B cell (primary cell): ENCODE measurements at regions of chr4 and their contacts with region 1.

Region 1: DNA sequence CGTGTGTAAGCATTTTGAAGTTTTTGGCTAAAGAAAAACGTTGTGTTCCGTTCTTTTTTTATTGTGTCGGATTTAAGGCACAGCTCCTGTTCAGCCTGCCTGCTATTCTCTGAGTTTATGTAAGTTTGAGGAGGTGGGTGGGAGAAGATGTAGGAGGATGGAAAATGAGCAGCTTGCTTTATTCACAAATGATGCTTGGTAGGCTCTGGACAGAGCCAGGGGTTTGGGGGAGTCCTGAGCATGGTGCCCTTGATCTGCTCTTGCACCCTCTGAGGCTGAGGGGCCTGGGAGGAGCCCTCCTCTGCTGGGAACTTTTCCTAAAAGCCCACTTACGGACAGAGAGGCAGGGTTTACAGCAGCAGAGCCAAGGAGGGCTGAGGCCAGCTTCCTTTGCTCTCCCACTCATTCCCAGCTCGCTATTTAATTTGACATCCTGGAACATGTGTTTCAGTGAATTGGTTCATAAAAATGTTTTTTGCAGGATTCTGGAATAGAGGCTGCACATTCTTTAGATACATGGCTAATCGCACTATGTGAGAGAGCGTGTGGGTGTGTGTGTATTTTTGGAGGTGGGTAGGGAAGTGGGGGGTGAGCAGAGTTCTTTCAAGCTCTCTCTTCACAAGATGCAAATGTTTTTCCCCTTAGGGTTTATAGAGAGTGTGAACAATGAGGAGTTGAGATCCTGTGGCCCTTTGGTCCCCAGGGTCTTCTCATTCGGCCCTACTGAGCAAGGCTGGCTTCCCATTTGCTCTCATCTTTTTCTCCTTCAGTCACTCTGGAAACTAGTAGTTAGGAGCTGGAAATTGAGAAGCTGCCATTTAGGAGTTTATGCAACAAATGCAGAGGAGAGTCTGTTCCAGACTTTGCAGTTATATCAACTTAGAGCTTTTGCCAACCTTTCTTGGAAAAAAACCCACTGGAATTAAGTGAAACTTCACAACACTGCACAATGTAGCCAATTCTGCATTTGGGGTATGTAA is 32.1 kb downstream of the TMEM131L start:
- DNase-seq: peak; percentile 62
- ATAC-seq: peak; percentile 82
- H3K4me3 ChIP-seq: peak overlapping the region in 2 of 5 experiments; percentile 18 to 30
- H3K4me3 Mint-ChIP-seq: peak overlapping the region; percentile 75
- H3K27ac ChIP-seq: peak overlapping the region; percentile 7 to 98
- H3K27ac Mint-ChIP-seq: peak overlapping the region; percentile 85
- H3K4me1 ChIP-seq: peaks cover 80 to 83% of the 10 kb centered on the region in 2 donors
- H3K4me1 Mint-ChIP-seq: peaks cover 91% of the 10 kb centered on the region
- H3K27me3 ChIP-seq: no peaks in the 10 kb centered on the region
- H3K27me3 Mint-ChIP-seq: no peaks in the 10 kb centered on the region
- CTCF ChIP-seq: no peak

Region 2: DNA sequence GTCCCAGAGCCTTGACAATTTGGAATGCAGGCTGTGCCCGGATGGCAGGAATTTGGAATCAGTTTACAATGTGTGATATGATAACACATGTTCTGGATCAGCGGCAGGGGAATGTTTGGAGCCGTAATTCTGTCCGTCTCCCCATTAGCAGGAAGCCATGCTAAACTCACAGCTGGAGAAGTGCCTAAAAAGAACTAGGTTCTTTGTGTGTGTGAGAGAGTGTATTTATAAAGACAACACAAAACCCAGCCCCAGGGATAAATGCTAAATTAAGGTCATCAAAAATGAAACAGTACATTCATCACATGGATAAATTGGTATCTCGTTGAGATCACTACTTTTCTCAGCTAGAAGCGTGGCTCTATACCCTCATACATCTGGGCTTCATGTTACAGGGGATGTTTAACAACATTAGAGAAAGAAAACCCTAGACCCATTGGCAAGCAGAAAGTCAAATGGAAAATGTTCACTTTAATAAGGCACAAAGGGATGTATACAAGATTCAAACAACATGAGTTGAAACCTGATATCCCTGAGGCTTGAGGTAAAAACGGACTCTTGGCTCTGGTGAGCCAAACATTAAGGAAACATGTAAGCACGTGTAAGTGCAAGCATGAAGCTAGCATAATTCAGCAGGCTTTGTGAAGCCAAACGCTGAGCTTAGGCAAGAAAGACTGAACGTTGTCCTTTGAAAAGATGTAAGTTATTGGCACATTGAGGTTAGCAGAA is 50.1 kb before region 1 on chr4:
- CTCF ChIA-PET with region 1: no interaction called
- POLR2A ChIA-PET with region 1: no interaction called
- intact Hi-C with region 1: no loop called
- DNase-seq: no peak
- ATAC-seq: no peak
- H3K4me3 ChIP-seq: no peak overlapping the region
- H3K4me3 Mint-ChIP-seq: no peak overlapping the region
- H3K27ac ChIP-seq: peak overlapping the region in 1 of 2 donors; percentile 77
- H3K27ac Mint-ChIP-seq: peak overlapping the region; percentile 26
- H3K4me1 ChIP-seq: peaks cover 15 to 20% of the 10 kb centered on the region in 2 donors
- H3K4me1 Mint-ChIP-seq: peaks cover 27% of the 10 kb centered on the region
- H3K27me3 ChIP-seq: no peaks in the 10 kb centered on the region
- H3K27me3 Mint-ChIP-seq: no peaks in the 10 kb centered on the region
- CTCF ChIP-seq: no peak

Region 3: DNA sequence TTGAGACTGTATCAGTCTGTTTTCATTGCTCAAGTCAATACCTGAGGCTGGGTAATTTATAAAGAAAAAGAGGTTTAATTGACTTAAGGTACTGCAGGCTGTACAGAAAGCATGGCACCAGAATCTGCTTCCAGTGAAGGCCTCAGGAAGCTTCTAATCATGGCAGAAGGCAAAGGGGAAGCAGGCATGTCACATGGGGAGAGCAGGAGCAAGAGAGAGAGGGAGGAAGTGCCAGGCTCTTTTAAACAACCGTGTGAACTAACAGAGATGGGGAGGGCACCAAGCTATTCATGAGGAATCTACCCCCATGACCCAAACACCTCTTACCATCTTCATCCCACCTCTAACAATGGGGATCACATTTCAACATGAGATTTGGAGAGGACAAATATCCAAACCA is 39.3 kb before region 1 on chr4:
- CTCF ChIA-PET with region 1: no interaction called
- POLR2A ChIA-PET with region 1: no interaction called
- intact Hi-C with region 1: no loop called
- DNase-seq: no peak
- ATAC-seq: no peak
- H3K4me3 ChIP-seq: no peak overlapping the region
- H3K4me3 Mint-ChIP-seq: no peak overlapping the region
- H3K27ac ChIP-seq: no peak overlapping the region
- H3K27ac Mint-ChIP-seq: no peak overlapping the region
- H3K4me1 ChIP-seq: peaks cover 0 to 4% of the 10 kb centered on the region in 2 donors
- H3K4me1 Mint-ChIP-seq: peaks cover 6% of the 10 kb centered on the region
- H3K27me3 ChIP-seq: no peaks in the 10 kb centered on the region
- H3K27me3 Mint-ChIP-seq: no peaks in the 10 kb centered on the region
- CTCF ChIP-seq: no peak

Region 4: DNA sequence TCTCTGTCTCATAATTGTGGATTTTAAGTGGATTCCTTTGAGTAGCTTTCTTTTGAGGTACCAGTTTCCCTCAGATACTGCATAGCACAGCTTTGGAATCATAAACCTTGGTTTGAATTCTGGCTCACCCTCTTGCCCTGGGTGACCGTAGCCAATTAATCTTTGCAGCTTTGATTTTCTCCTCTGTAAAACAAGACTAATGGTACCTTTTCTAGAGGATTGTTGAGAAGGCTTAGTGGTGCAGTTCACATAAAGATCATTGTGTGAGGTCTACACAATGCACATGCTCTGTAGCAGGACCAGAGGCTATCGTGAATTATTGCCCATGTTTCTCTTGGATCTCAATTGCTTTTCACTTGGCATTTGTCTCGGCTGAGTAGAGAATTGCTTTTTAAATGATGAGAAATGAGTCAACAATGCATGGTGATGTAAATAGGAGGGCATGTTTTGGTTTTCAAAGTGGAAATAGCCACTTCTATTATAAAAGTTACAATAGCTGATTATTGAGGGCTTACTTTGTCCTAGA is 15.8 kb after region 1 on chr4:
- CTCF ChIA-PET with region 1: interaction called, 6 read pairs
- POLR2A ChIA-PET with region 1: interaction called, 16 read pairs
- intact Hi-C with region 1: loop called (anchors 1 kb)
- DNase-seq: no peak
- ATAC-seq: no peak
- H3K4me3 ChIP-seq: no peak overlapping the region
- H3K4me3 Mint-ChIP-seq: peak overlapping the region; percentile 37
- H3K27ac ChIP-seq: peak overlapping the region in 1 of 2 donors; percentile 66
- H3K27ac Mint-ChIP-seq: peak overlapping the region; percentile 78
- H3K4me1 ChIP-seq: peaks cover 33 to 36% of the 10 kb centered on the region in 2 donors
- H3K4me1 Mint-ChIP-seq: peaks cover 71% of the 10 kb centered on the region
- H3K27me3 ChIP-seq: no peaks in the 10 kb centered on the region
- H3K27me3 Mint-ChIP-seq: no peaks in the 10 kb centered on the region
- CTCF ChIP-seq: no peak

Region 5: DNA sequence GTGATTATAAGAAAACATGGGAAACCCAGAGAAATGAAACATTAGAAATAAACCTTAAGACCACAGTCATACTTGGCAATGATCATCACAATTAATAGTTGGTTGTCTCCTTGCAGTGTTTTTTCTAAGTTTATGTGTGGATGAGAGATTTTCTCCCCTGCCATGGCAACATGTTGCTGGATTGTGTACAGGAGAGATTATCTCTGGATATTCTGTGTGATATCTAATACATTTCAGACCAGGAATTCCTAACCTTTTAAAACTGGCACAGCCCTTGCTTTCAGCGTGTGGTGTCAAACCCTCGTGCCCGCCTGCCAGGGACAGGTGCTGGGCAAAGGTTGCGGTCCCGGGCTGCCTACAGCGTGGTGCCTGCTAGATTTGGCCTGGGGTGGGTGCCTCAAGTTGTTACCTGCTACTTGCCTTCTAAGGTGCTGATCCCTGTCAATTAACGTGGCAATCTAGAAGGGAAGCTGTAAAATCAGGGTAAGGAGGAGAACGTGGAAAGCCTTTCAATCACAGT is 68.4 kb after region 1 on chr4:
- CTCF ChIA-PET with region 1: no interaction called
- POLR2A ChIA-PET with region 1: no interaction called
- intact Hi-C with region 1: no loop called
- DNase-seq: no peak
- ATAC-seq: no peak
- H3K4me3 ChIP-seq: no peak overlapping the region
- H3K4me3 Mint-ChIP-seq: no peak overlapping the region
- H3K27ac ChIP-seq: peak overlapping the region in 1 of 2 donors; percentile 35
- H3K27ac Mint-ChIP-seq: peak overlapping the region; percentile 72
- H3K4me1 ChIP-seq: peaks cover 25 to 26% of the 10 kb centered on the region in 2 donors
- H3K4me1 Mint-ChIP-seq: peaks cover 46% of the 10 kb centered on the region
- H3K27me3 ChIP-seq: no peaks in the 10 kb centered on the region
- H3K27me3 Mint-ChIP-seq: no peaks in the 10 kb centered on the region
- CTCF ChIP-seq: no peak

Region 6: GRCh38 chr4:153962311-153963039 is 464.2 kb after region 1 on chr4:
- CTCF ChIA-PET with region 1: no interaction called
- POLR2A ChIA-PET with region 1: no interaction called
- intact Hi-C with region 1: no loop called
- DNase-seq: no peak
- ATAC-seq: no peak
- H3K4me3 ChIP-seq: no peak overlapping the region
- H3K4me3 Mint-ChIP-seq: no peak overlapping the region
- H3K27ac ChIP-seq: no peak overlapping the region
- H3K27ac Mint-ChIP-seq: no peak overlapping the region
- H3K4me1 ChIP-seq: no peaks in the 10 kb centered on the region
- H3K4me1 Mint-ChIP-seq: no peaks in the 10 kb centered on the region
- H3K27me3 ChIP-seq: no peaks in the 10 kb centered on the region
- H3K27me3 Mint-ChIP-seq: no peaks in the 10 kb centered on the region
- CTCF ChIP-seq: no peak